ENCODE measurements at regions of chr2 and their contacts with region 1.

Region 1: GRCh38 chr2:171416009-171416926 is 17.5 kb downstream of the METTL8 start:
- DNase-seq: peak; percentile 98
- H3K4me3 ChIP-seq: peak overlapping the region; percentile 24; the same call in 1 of the 2 replicates
- H3K27ac ChIP-seq: peak overlapping the region; percentile 58
- H3K4me1 ChIP-seq: peaks cover 23% of the 10 kb centered on the region
- H3K27me3 ChIP-seq: no peaks in the 10 kb centered on the region

Region 2: DNA sequence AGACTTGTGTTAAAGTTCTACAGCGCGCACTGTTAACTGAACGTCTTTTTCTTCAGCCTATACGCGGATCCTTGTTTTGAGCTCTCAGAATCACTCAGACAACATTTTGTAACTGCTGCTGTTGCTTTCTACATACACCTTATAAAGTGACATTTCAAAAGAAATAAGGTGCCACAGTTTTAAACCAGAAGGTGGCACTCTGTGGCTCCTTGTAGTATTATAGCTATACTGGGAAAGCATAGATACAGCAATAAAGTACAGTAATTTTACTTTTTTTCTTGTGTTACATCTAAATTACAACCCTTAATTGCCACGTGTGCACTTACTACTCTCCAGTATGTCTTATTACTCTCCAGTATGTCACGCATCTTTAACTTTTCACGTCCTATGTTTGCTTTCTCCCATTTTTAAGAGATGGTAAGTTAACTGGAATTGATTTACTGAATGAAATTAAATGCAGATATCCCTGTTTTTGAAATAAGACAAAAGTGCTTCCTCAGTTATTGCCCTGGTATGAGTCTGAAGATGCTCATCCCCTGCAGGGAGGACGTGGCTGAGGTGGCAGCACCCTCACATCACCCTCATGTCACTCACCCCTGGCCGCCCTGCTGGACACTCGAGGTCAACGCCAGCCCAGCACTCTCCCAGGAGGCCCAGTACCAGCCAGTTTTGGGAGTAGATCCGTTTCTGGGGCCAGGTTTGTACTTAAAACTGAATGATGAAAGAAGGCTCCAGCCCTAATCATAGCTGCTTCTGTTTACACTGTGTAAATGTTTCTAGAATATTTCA is 449.4 kb before region 1 on chr2:
- in situ Hi-C with region 1: loop called (anchors 10 kb)
- DNase-seq: peak; percentile 36
- H3K4me3 ChIP-seq: no peak overlapping the region
- H3K27ac ChIP-seq: no peak overlapping the region
- H3K4me1 ChIP-seq: no peaks in the 10 kb centered on the region
- H3K27me3 ChIP-seq: no peaks in the 10 kb centered on the region

Region 3: GRCh38 chr2:171160119-171160955 is 255.9 kb before region 1 on chr2 and contains the start of gene TLK1:
- in situ Hi-C with region 1: loop called (anchors 25 kb)
- DNase-seq: peak; percentile 92
- H3K4me3 ChIP-seq: peak within 1 kb of the TSS; percentile 87
- H3K27ac ChIP-seq: peak within 1 kb of the TSS; percentile 97
- H3K4me1 ChIP-seq: peaks cover 13% of the 10 kb centered on the region
- H3K27me3 ChIP-seq: no peaks in the 10 kb centered on the region
- total RNA-seq, gene TLK1: 9.6 and 23.6 TPM in 2 replicates

Region 4: GRCh38 chr2:171630812-171631626 is 214.8 kb after region 1 on chr2:
- in situ Hi-C with region 1: no loop called
- DNase-seq: no peak
- H3K4me3 ChIP-seq: no peak overlapping the region
- H3K27ac ChIP-seq: no peak overlapping the region
- H3K4me1 ChIP-seq: no peaks in the 10 kb centered on the region
- H3K27me3 ChIP-seq: peaks cover 7% of the 10 kb centered on the region; the same call in 1 of the 2 replicates

Measured in GM23248 (cell line).